ENCODE measurements at regions of chr17 and their contacts with region 1.

Region 1: GRCh38 chr17:7856883-7857723 is at the start of gene NAA38:
- DNase-seq: peak; percentile 98
- ATAC-seq: peak; percentile 90
- total RNA-seq, gene NAA38: 101 TPM

Region 2: GRCh38 chr17:7703584-7704479 is 153.3 kb before region 1 on chr17:
- intact Hi-C with region 1: no loop called
- DNase-seq: peak; percentile 31
- ATAC-seq: peak; percentile 73

Region 3: GRCh38 chr17:7729816-7730215 is 127.3 kb before region 1 on chr17:
- intact Hi-C with region 1: no loop called
- DNase-seq: no peak
- ATAC-seq: no peak

Region 4: GRCh38 chr17:7825206-7825990 is 31.7 kb before region 1 on chr17:
- intact Hi-C with region 1: loop called (anchors 5 kb)
- DNase-seq: no peak
- ATAC-seq: no peak

Region 5: DNA sequence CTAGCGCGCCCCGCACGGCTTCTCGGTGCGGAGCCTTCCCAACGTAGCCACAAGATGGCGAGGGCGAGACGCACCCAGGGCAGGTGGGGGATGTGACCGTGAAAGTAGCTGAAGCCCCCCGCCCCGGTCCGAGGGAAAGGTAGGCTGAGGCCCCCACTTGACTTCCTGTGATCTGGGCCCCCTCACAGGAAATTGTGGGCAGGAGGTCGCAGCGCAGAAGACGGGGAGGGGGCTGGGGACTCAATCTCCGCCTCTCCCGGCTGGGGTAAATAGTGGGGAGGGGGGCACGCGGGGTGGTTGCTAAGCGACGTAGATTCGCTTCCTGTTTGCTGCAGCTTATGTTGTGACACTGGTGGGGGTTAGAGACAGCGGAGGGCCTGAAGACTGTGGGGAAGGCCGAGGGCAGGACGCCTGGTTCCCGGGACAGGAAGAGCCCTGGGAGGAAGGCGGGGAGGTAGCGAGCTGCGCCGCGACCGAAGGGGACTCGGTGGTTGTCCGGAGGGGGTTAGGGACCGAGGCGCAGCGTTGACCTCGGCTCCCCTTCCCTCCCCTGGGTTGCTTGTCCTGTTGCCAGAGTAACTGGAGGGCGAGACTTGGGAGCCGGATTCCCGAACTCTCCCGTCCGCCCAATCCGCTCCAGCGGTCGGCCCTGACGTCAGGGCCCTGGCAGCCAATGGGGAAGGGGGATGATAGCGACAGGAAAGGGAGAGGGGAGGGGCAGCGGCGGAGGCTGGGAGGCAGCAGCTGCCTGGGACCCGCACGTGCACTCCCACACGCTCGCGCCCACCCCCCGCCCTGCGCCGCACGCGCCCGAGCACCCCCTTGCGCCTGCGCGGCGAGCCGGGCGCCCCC is 21.9 kb before region 1 on chr17:
- intact Hi-C with region 1: loop called (anchors 2 kb)
- DNase-seq: peak; percentile 98
- ATAC-seq: peak; percentile 80

Region 6: GRCh38 chr17:7844292-7845154 is 12.6 kb before region 1 on chr17:
- intact Hi-C with region 1: loop called (anchors 1 kb)
- DNase-seq: peak; percentile 93
- ATAC-seq: peak; percentile 74

Measured in Right ventricle myocardium superior (tissue), 1 donor.